ENCODE measurements at regions of chr12 and their contacts with region 1.

Region 1: DNA sequence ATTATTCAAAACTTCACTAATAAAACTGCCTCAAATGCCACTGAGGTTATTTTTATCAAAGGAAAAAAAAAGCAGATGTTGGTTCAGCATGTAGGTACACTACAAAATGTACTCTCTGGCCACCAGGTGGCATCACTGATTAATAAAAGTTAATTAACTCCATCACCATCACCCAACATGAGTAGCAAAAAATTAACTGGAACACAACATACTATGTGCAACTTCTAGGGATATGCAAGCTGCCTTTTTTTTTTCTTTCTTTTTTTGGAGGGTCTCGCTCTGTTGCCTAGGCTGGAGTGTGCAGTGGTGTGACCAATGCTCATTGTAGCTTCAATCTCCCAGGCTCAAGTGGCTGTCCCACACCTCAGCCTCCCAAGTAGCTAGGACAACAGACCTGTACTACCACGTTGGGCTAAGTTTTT is 43.8 kb upstream of the NR2C1 start:
- DNase-seq: peak; percentile 38
- ATAC-seq: peak; percentile 97
- H3K4me3 ChIP-seq: no peak overlapping the region
- H3K27ac ChIP-seq: no peak overlapping the region
- H3K4me1 ChIP-seq: peaks cover 4% of the 10 kb centered on the region
- H3K27me3 ChIP-seq: no peaks in the 10 kb centered on the region
- CTCF ChIP-seq: peak; percentile 39 to 73 (median 54); a peak in 5 of 6 replicates
- EP300 ChIP-seq: no peak
- POLR2A ChIP-seq: no peak
- RAD21 ChIP-seq: peak; percentile 76

Region 2: GRCh38 chr12:95336390-95337067 is 219.3 kb after region 1 on chr12:
- CTCF ChIA-PET with region 1: interaction called, 6 read pairs
- POLR2A ChIA-PET with region 1: no interaction called
- RAD21 ChIA-PET with region 1: no interaction called
- SMC1A ChIA-PET with region 1: interaction called, 7 read pairs
- in situ Hi-C with region 1: no loop called
- intact Hi-C with region 1: loop called (anchors 2 kb)
- DNase-seq: no peak
- ATAC-seq: peak; percentile 56
- H3K4me3 ChIP-seq: no peak overlapping the region
- H3K27ac ChIP-seq: no peak overlapping the region
- H3K4me1 ChIP-seq: no peaks in the 10 kb centered on the region
- H3K27me3 ChIP-seq: no peaks in the 10 kb centered on the region; a peak in 2 of 4 replicates
- CTCF ChIP-seq: peak in 2 of 3 experiments; percentile 38 to 39; a peak in 3 of 6 replicates
- EP300 ChIP-seq: no peak
- POLR2A ChIP-seq: no peak
- RAD21 ChIP-seq: peak; percentile 47; the same call in 1 of the 2 replicates

Region 3: DNA sequence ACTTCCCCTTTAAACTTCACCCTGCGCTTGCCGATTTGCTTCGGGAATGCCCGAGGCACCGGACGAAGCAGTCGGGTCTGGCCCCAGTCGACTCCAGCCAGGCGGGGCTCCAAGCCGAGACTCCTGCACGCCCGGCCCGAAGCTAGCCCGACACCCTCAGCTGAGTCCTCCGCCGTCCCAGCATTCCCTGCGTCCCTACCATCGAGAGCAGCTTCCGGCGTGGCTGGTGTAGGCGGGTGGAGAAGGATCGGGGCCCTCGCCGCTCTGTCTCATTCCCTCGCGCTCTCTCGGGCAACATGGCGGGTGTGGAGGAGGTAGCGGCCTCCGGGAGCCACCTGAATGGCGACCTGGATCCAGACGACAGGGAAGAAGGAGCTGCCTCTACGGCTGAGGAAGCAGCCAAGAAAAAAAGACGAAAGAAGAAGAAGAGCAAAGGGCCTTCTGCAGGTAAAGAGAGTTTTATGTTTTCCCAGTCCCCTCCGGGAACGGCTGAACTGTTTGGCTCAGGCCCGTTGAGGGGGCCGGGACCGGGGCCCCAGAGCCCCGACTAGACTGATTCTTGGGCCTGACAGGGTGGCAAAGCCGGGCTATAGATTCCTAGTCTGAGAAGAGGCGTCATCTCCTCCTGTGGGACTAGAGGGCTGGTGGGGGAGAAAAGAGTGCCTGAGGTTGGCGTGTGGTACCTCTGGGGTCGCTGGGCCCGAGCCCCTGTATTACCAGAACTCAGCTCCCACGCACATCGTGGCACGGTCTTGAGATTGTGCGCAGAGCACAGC is 356.9 kb after region 1 on chr12 and contains the start of gene METAP2:
- CTCF ChIA-PET with region 1: interaction called, 3 read pairs
- POLR2A ChIA-PET with region 1: no interaction called
- RAD21 ChIA-PET with region 1: interaction called, 3 read pairs
- SMC1A ChIA-PET with region 1: no interaction called
- in situ Hi-C with region 1: no loop called
- intact Hi-C with region 1: loop called (anchors 2 kb)
- DNase-seq: peak; percentile 84
- ATAC-seq: peak; percentile 98
- H3K4me3 ChIP-seq: peak within 1 kb of the TSS; percentile 98
- H3K27ac ChIP-seq: peak within 1 kb of the TSS; percentile 87
- H3K4me1 ChIP-seq: no peaks in the 10 kb centered on the region
- H3K27me3 ChIP-seq: no peaks in the 10 kb centered on the region
- CTCF ChIP-seq: no peak
- EP300 ChIP-seq: no peak
- POLR2A ChIP-seq: peak; percentile 99
- RAD21 ChIP-seq: no peak
- polyA plus RNA-seq, gene METAP2: 50.7 to 83.6 TPM

Region 4: DNA sequence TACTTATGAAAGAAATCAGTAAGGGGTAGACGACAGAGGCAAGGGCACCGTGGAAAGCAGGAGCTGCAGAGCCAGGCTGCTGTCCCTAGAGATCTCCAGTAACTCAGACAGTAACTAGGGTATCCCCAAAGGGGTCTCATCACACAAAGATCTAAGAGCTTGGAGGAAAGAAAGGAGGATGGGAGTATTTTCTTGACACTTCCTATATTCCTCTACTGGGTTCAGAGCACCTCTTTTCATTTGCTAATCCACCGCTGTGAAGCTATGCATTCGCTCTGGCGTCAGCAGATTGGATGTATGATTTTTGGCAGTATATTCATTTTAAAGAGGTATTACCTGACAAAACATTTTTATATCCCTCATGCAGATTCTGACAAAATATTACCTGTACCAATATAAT is 421.5 kb after region 1 on chr12:
- CTCF ChIA-PET with region 1: interaction called, 120 read pairs
- POLR2A ChIA-PET with region 1: no interaction called
- RAD21 ChIA-PET with region 1: interaction called, 64 read pairs
- SMC1A ChIA-PET with region 1: interaction called, 64 read pairs
- in situ Hi-C with region 1: loop called (anchors 5 kb)
- intact Hi-C with region 1: loop called (anchors 1 kb)
- DNase-seq: no peak
- ATAC-seq: no peak
- H3K4me3 ChIP-seq: no peak overlapping the region
- H3K27ac ChIP-seq: no peak overlapping the region
- H3K4me1 ChIP-seq: no peaks in the 10 kb centered on the region
- H3K27me3 ChIP-seq: no peaks in the 10 kb centered on the region; a peak in 1 of 4 replicates
- CTCF ChIP-seq: no peak
- EP300 ChIP-seq: no peak
- POLR2A ChIP-seq: no peak
- RAD21 ChIP-seq: no peak

Region 5: DNA sequence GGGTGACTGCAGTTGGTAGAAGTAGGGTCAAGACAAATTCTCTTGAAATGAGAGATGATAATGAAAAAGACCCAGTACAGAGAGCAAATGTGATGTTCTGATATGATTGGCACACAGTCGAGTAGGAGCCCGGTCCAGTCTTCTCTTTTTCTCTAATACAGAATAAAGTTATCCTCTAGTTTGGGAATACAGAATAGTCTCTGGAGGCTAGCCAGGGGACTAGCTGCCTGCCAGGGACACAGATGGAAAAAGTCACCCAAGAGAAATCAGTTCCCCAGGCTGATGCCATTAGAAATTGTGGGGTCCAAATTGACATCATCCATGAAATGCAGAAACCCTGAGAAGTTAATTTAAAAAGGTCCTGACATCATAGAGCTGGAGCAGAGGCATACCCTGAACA is 1612.7 kb after region 1 on chr12:
- CTCF ChIA-PET with region 1: no interaction called
- POLR2A ChIA-PET with region 1: no interaction called
- RAD21 ChIA-PET with region 1: no interaction called
- SMC1A ChIA-PET with region 1: no interaction called
- in situ Hi-C with region 1: no loop called
- intact Hi-C with region 1: no loop called
- DNase-seq: no peak
- ATAC-seq: no peak
- H3K4me3 ChIP-seq: no peak overlapping the region
- H3K27ac ChIP-seq: no peak overlapping the region
- H3K4me1 ChIP-seq: no peaks in the 10 kb centered on the region
- H3K27me3 ChIP-seq: no peaks in the 10 kb centered on the region
- CTCF ChIP-seq: no peak
- EP300 ChIP-seq: no peak
- POLR2A ChIP-seq: no peak
- RAD21 ChIP-seq: no peak